ENCODE measurements at regions of chr20 and their contacts with region 1.

Region 1: GRCh38 chr20:13546497-13547131 is 92.1 kb downstream of the TASP1 start:
- DNase-seq: peak; percentile 74
- H3K4me3 Mint-ChIP-seq: no peak overlapping the region
- H3K27ac Mint-ChIP-seq: no peak overlapping the region
- H3K4me1 Mint-ChIP-seq: no peaks in the 10 kb centered on the region
- H3K27me3 Mint-ChIP-seq: no peaks in the 10 kb centered on the region

Region 2: DNA sequence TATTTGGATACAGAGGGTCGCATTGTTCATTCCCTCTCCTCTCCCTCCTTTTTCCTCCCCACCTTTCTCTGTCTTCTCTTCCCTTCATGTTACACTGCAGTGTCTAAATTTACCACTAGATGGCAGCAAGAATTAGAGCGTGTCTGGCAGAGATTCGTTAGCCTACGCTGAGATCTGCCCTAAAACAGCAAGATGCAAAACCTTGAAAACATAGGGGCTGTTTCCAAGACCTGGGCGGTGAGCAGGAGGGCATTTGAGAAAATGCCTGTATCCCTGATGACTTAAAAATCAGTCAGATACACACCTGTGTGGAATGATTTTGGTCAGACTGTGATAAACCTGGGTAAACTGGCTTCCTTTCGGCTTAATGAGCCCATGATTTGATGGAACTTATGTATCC is 427.0 kb before region 1 on chr20:
- CTCF ChIA-PET with region 1: interaction called, 16 read pairs
- POLR2A ChIA-PET with region 1: no interaction called
- DNase-seq: peak; percentile 26
- H3K4me3 Mint-ChIP-seq: no peak overlapping the region
- H3K27ac Mint-ChIP-seq: no peak overlapping the region
- H3K4me1 Mint-ChIP-seq: no peaks in the 10 kb centered on the region
- H3K27me3 Mint-ChIP-seq: peaks cover 2% of the 10 kb centered on the region

Region 3: GRCh38 chr20:13458860-13459451 is 87.7 kb before region 1 on chr20:
- CTCF ChIA-PET with region 1: interaction called, 22 read pairs
- POLR2A ChIA-PET with region 1: no interaction called
- DNase-seq: no peak
- H3K4me3 Mint-ChIP-seq: no peak overlapping the region
- H3K27ac Mint-ChIP-seq: no peak overlapping the region
- H3K4me1 Mint-ChIP-seq: no peaks in the 10 kb centered on the region
- H3K27me3 Mint-ChIP-seq: no peaks in the 10 kb centered on the region

Region 4: GRCh38 chr20:13533946-13534345 is 12.7 kb before region 1 on chr20:
- CTCF ChIA-PET with region 1: interaction called, 43 read pairs
- POLR2A ChIA-PET with region 1: interaction called, 3 read pairs
- DNase-seq: no peak
- H3K4me3 Mint-ChIP-seq: no peak overlapping the region
- H3K27ac Mint-ChIP-seq: no peak overlapping the region
- H3K4me1 Mint-ChIP-seq: no peaks in the 10 kb centered on the region
- H3K27me3 Mint-ChIP-seq: no peaks in the 10 kb centered on the region

Region 5: GRCh38 chr20:13771853-13772453 is 225.3 kb after region 1 on chr20:
- CTCF ChIA-PET with region 1: interaction called, 19 read pairs
- POLR2A ChIA-PET with region 1: no interaction called
- DNase-seq: no peak
- H3K4me3 Mint-ChIP-seq: no peak overlapping the region
- H3K27ac Mint-ChIP-seq: no peak overlapping the region
- H3K4me1 Mint-ChIP-seq: peaks cover 8% of the 10 kb centered on the region
- H3K27me3 Mint-ChIP-seq: no peaks in the 10 kb centered on the region